Right lobe of liver (tissue), 6 donors: ENCODE measurements at regions of chr22 and their contacts with region 1.

Region 1: GRCh38 chr22:50627642-50628542 is at the start of gene ARSA:
- DNase-seq: peak; percentile 88 to 91 (median 91)
- ATAC-seq: peak; percentile 86 to 93 (median 90)
- H3K4me3 ChIP-seq: peak within 1 kb of the TSS; percentile 85 to 89 (median 87)
- H3K27ac ChIP-seq: peak within 1 kb of the TSS; percentile 65 to 75 (median 67)
- H3K4me1 ChIP-seq: peaks cover 0 to 6% (median 0%) of the 10 kb centered on the region in 4 donors
- H3K27me3 ChIP-seq: no peaks in the 10 kb centered on the region
- CTCF ChIP-seq: peak in 3 of 4 donors; percentile 38 to 65 (median 47)
- POLR2A ChIP-seq: peak; percentile 82
- total RNA-seq, gene ARSA: 20.8 to 47.3 (median 38.6) TPM

Region 2: DNA sequence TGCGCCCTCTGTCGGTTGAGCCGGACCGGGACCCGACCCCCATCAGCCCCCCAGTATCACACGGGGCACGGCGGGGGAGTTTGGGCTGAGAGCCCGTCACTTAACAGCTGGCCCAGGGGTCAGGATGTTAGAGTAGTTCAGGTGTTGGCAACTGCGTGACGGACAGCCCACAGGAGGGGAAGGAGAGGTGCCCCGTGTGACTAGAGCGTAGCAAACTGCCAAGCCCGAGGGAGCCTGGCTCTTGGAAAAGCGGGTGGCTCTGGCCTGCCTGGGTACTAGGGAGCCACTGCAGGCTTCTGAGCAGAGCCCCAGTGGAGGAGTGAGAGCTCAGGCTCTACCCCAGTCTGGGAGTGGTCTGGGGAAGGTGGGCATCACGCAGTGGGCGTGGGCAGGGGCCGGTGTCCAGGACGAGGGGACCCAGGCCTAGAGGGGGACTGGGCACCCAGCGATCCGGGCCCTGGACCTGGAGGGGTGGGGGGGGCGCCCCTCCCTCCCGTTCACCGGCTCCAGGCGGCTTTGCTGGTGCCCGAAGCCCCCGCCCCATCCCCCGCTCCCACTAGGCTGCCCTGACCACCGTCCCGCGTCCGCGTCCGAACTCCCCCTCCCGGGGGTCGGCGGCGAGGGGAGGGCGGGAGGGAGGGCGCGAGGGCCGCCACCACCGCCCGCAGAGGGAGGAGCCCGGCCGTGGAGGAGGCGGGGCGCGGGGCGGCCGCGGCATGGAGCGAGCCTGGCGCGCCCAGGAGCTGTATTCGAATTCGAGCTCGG is 69.1 kb after region 1 on chr22:
- intact Hi-C with region 1: loop called in 1 of 2 experiments (anchors 5 kb)
- DNase-seq: peak; percentile 36 to 57 (median 52)
- ATAC-seq: peak in 1 of 4 donors; percentile 15
- H3K4me3 ChIP-seq: peak overlapping the region in 2 of 3 donors; percentile 38 to 62
- H3K27ac ChIP-seq: peak overlapping the region in 1 of 3 donors; percentile 10
- H3K4me1 ChIP-seq: peaks cover 0 to 43% (median 18%) of the 10 kb centered on the region in 4 donors
- H3K27me3 ChIP-seq: no peaks in the 10 kb centered on the region
- CTCF ChIP-seq: peak; percentile 19 to 41 (median 21)
- POLR2A ChIP-seq: no peak